Dorsolateral prefrontal cortex (tissue), 120 donors: ENCODE measurements at regions of chr4 and their contacts with region 1.

Region 1: GRCh38 chr4:88697588-88698329 is at the start of gene NAP1L5:
- DNase-seq: peak; percentile 58 to 80 (median 74)
- H3K4me3 ChIP-seq: peak within 1 kb of the TSS; percentile 42 to 84 (median 67)
- H3K27ac ChIP-seq: peak within 1 kb of the TSS; percentile 28 to 94 (median 84)
- H3K27me3 ChIP-seq: no peaks in the 10 kb centered on the region
- CTCF ChIP-seq: no peak
- total RNA-seq, gene NAP1L5: 20.1 to 153 (median 95.5) TPM

Region 2: DNA sequence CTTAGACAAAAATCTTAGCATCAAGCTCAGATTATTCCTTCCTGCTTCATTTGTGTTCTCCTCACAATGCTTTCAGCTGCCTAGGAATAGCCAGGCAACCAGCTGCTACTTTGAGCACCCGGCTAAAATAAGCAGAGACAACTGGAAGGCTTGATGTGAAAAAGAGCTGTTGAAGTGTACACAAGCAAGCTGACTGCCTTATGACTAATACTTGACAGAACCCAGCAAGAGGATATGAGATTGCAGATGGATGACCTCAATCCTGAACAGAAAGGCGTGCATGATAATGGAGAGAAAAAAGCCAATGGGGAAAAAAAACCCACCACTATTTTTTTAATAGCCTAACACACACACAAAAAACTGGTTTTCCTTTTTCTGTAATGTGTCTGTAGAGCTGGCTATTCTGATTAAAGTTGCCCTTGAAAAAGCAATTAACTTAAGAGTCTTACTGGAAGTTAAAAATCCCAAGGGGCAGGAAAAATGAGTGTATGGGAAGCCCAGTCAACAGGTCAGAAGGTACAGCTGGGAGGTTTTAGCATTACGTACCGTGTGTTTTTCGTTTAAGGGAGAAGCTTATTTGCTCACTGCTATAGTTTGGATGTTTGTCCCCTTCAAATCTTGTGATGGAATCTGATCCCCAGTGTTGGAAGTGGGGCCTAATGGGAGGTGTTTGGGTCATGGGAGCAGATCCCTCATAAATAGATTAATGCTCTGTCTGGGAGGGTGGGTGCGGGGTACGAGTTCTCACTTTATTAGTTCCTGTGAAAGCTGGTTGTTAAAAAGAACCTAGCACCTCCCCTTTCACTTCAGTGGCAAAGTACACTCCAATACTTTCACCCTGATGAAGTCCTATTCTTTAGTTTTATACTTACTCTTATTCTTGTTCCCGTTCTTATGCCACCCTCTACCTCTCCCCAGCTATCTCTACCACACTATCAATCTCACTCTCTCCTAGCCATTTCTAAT is 356.2 kb before region 1 on chr4:
- intact Hi-C with region 1: no loop called
- DNase-seq: peak in 6 of 10 donors; percentile 7 to 70 (median 48)
- H3K4me3 ChIP-seq: no peak overlapping the region
- H3K27ac ChIP-seq: peak overlapping the region in 49 of 59 donors; percentile 8 to 84 (median 62)
- H3K27me3 ChIP-seq: no peaks in the 10 kb centered on the region
- CTCF ChIP-seq: no peak

Region 3: GRCh38 chr4:89101256-89102161 is 403.8 kb after region 1 on chr4:
- intact Hi-C with region 1: loop called in 1 of 2 experiments (anchors 10 kb)
- DNase-seq: no peak
- H3K4me3 ChIP-seq: no peak overlapping the region
- H3K27ac ChIP-seq: no peak overlapping the region
- H3K27me3 ChIP-seq: no peaks in the 10 kb centered on the region
- CTCF ChIP-seq: no peak